ENCODE measurements at regions of chr17 and their contacts with region 1.

Region 1: DNA sequence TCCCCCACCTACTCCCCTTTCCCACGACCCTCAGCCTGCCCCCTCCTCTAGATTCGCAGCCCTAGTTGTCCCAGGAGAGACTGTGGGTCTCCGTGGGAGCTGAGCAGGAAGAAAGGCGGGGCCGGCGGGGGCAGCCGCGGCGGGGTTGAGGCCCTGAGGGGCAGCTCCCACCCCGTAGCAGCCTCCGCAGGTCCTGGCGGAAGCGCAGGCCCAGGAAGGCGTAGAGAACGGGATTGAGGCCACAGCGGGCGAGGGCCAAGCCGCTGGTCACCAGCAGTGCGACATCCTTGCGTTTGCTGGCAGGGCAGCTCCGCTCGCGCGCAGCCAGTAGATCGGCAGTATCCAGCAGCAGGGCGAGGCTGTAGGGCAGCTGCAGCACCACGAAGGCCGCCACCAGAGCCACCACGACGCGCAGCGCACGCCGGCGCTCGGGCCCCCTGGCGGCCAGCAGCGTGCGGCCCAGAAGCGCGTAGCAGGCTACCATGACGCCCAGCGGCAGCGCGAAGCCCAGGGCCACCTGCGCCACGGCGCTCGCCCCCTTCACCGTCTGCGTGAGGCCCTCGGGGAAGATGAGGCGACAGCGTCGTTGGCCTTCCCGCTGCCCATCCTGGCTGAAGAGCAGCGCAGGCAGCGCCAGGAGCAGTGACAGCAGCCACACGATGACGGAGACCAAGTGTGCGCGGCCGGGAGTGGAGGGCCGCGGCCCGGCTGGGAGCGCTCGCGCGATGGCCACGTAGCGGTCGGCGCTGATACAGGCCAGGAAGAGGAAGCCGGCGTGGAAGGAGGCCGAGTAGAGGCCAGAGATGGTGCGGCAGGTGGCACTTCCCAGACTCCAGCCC is 1.9 kb downstream of the CCR10 start:
- DNase-seq: peak; percentile 68 to 84
- ATAC-seq: peak; percentile 48

Region 2: GRCh38 chr17:42577532-42578281 is 102.0 kb before region 1 on chr17 and contains the start of gene PSMC3IP:
- intact Hi-C with region 1: loop called in 1 of 2 experiments (anchors 10 kb)
- DNase-seq: peak; percentile 96 to 97
- ATAC-seq: peak; percentile 91
- total RNA-seq, gene PSMC3IP: 1.6 to 2.2 TPM

Region 3: DNA sequence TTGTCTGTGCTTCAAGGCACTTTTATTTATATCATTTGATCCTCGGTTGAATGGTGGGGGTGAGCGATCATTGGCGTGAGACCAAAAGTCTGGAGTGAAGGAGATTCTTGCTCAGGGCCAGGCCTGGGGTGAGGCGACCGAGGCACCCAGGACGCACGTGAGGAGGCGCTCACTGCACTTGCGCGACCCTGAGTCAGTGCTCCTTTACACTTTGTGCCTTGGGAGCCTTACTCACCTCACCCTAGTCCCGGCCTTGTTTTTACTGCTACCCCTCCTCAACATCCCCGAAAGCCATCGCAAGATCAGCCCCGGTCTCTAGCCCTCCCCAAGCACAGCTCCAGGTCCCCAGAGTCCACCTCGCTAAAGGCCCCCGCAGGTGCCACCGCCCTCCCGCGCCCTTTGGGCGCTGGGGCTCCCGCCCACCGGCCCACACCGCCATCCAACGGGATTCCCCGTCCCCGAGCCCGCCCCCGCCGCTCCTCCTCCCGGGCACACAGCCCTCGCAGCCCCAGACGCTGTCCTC is 64.6 kb after region 1 on chr17:
- intact Hi-C with region 1: no loop called
- DNase-seq: peak; percentile 74 to 81
- ATAC-seq: peak; percentile 82

Region 4: DNA sequence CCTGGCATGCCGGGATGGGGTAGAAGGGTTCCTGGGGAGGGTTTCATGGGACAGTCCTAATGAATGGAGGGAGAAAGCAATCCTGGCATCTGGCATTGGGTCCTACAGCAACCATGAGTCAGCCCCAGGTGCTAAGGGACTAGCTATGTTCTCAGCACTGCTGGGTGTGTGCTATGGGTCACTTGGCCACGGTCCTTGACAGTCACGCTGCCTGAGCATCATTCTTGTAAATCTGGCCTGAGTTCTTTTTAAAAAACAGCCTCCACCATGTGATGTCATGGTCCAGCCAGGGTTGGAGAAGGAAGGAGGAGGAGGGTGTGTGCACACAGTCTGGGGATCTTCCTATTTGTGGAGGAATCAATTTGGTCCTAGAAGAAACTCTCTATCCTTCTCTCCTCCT is 75.1 kb after region 1 on chr17:
- intact Hi-C with region 1: no loop called
- DNase-seq: peak in 1 of 2 donors; percentile 32
- ATAC-seq: no peak

Region 5: DNA sequence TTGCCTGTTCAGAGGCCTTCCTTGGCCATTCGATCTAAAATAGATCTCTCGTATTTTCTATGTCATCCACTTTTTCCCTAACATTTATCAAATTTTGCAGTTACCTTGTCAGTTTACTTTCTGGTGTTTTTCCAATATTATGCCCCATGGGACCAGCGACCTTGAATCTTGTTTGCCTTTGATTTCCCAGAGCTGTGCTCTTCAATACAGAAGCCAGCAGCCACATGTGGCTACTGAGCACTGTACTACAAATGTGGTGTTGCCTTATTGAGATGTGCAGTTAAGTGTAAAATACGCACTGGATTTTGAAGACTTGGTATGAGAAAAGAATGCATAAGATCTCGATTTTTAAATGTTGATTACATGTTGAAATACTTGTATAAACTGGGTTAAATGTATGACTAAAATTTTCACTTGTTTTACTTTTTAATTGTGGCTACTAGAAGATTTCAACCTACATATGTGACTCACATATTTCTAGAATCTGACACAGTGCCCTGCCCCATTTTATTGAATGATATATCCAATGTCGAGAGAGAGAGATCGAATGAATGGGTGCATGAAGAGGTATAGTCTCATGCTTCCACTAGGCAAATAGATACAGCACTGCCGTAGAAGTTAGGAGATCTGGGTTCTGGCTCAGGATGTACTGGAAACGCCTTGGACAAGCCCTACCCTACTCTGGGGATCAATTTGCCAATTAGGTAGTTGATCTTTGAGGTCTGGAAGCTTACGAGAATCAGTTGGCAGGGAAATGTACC is 152.7 kb after region 1 on chr17:
- intact Hi-C with region 1: no loop called
- DNase-seq: no peak
- ATAC-seq: peak; percentile 35